Caco-2 (cell line): ENCODE measurements at regions of chr15 and their contacts with region 1.

Region 1: DNA sequence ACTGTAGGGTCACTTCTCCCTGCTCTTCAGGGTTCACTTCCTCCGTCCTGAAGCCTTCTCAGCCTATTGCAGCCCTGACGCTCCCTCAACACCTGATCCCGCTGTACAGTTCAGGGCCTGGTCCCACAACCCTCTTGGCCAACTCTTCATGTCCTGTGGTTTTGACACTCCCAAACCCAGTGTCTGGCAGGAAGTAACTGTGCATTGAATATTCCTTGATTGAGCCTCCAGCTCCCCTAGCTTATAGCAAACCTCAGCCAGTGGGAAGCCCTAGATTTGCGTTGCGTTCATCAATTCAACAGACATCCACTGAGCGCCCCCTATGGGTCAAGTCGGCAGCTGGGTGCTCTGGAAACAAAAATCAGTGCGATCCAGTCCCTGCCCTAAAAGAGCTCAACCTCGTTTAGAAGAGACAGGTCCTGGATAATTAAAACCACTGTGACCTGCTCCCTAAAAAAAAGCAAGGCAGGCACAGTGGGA is 13.5 kb downstream of the UBAP1L start:
- DNase-seq: peak; percentile 66 to 81
- H3K4me3 ChIP-seq: no peak overlapping the region
- H3K4me3 Mint-ChIP-seq: no peak overlapping the region
- H3K27ac Mint-ChIP-seq: peak overlapping the region; percentile 9
- H3K4me1 ChIP-seq: no peaks in the 10 kb centered on the region
- H3K4me1 Mint-ChIP-seq: peaks cover 6% of the 10 kb centered on the region
- H3K27me3 ChIP-seq: no peaks in the 10 kb centered on the region
- H3K27me3 Mint-ChIP-seq: no peaks in the 10 kb centered on the region
- CTCF ChIP-seq: peak; percentile 74 to 84

Region 2: GRCh38 chr15:64856429-64857145 is 244.9 kb before region 1 on chr15:
- CTCF ChIA-PET with region 1: no interaction called
- POLR2A ChIA-PET with region 1: no interaction called
- intact Hi-C with region 1: no loop called
- DNase-seq: no peak
- H3K4me3 ChIP-seq: no peak overlapping the region
- H3K4me3 Mint-ChIP-seq: no peak overlapping the region
- H3K27ac Mint-ChIP-seq: no peak overlapping the region
- H3K4me1 ChIP-seq: 0 out of 2 replicates have a peak, but pooled peaks cover 10% of the 10 kb centered on the region
- H3K4me1 Mint-ChIP-seq: peaks cover 14% of the 10 kb centered on the region
- H3K27me3 ChIP-seq: no peaks in the 10 kb centered on the region
- H3K27me3 Mint-ChIP-seq: no peaks in the 10 kb centered on the region
- CTCF ChIP-seq: no peak

Region 3: DNA sequence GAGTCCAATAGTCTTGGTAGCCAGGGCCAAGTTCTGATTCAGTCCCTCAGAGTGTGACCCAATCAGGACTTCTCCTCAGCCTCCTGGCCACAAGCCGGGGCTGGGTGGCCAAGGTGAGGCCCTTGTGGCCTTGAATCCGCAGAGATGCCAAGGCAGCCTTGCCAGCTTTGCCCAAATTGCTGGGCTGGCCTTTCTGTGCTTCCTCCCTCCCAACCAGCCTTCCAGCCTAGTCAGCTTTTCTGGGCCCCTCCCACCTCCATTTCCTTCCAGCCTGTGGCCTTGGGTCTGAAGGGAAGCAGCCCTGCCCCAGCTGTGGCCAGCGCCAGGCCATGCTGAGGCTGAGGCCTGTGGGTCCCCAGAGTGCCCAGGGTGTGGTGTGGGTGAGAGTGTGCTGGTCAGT is 224.0 kb before region 1 on chr15:
- CTCF ChIA-PET with region 1: no interaction called
- POLR2A ChIA-PET with region 1: no interaction called
- intact Hi-C with region 1: no loop called
- DNase-seq: no peak
- H3K4me3 ChIP-seq: no peak overlapping the region
- H3K4me3 Mint-ChIP-seq: no peak overlapping the region
- H3K27ac Mint-ChIP-seq: no peak overlapping the region
- H3K4me1 ChIP-seq: no peaks in the 10 kb centered on the region
- H3K4me1 Mint-ChIP-seq: peaks cover 7% of the 10 kb centered on the region
- H3K27me3 ChIP-seq: no peaks in the 10 kb centered on the region
- H3K27me3 Mint-ChIP-seq: no peaks in the 10 kb centered on the region
- CTCF ChIP-seq: no peak

Region 4: GRCh38 chr15:65044724-65045481 is 56.5 kb before region 1 on chr15 and contains the start of gene SLC51B:
- CTCF ChIA-PET with region 1: interaction called, 12 read pairs
- POLR2A ChIA-PET with region 1: no interaction called
- intact Hi-C with region 1: no loop called
- DNase-seq: peak; percentile 91 to 96
- H3K4me3 ChIP-seq: peak within 1 kb of the TSS; percentile 29
- H3K4me3 Mint-ChIP-seq: peak within 1 kb of the TSS; percentile 61
- H3K27ac Mint-ChIP-seq: peak within 1 kb of the TSS; percentile 70
- H3K4me1 ChIP-seq: peaks cover 59% of the 10 kb centered on the region
- H3K4me1 Mint-ChIP-seq: peaks cover 44% of the 10 kb centered on the region
- H3K27me3 ChIP-seq: no peaks in the 10 kb centered on the region
- H3K27me3 Mint-ChIP-seq: no peaks in the 10 kb centered on the region
- CTCF ChIP-seq: no peak
- total RNA-seq, gene SLC51B: 15.4 and 17.1 TPM in 2 replicates

Region 5: DNA sequence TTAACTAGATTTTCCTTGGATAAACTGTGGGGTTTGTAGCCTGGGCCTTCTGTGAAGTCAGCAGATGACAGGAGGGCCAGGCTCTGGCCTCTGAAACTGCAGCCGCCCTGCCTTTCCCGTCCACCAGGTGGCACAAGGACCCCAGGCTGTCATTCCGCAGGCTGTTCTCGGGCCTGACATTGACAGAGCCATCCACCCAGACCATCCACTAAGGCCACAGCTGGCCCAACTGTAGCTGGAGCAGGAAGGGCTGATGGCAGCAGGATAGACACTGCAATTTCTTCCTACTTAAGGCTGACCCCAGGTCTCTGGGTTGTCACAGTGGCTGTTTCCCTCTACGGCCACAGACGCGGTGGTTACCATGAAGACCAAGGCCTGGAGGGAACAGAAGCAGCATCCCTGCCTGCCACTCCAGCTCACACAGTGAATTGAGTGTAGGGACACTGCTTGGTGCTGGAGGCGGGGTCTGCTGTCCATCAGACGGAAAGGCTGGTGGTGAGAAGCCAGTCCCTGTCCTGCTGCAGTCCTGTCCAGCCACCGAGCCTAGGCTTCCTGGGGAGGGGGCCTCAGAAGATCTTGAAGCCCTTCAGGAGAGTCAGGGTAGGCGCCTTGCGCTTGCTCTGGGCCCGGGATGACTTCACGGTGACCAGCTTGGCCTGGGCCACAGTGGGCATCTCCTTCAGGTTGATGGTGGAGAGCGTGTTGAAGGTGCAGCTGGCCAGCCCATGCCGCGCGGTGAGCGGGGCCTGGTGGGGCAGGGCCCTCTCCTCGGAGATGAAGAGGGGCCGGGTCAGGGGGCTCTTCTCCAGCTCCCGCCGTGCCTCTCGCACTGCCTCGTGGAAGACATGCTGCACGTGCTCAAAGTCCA is 46.9 kb before region 1 on chr15:
- CTCF ChIA-PET with region 1: interaction called, 35 read pairs
- POLR2A ChIA-PET with region 1: interaction called, 4 read pairs
- intact Hi-C with region 1: loop called (anchors 1 kb)
- DNase-seq: peak; percentile 82 to 87
- H3K4me3 ChIP-seq: no peak overlapping the region
- H3K4me3 Mint-ChIP-seq: no peak overlapping the region
- H3K27ac Mint-ChIP-seq: peak overlapping the region; percentile 91
- H3K4me1 ChIP-seq: peaks cover 48% of the 10 kb centered on the region
- H3K4me1 Mint-ChIP-seq: peaks cover 31% of the 10 kb centered on the region
- H3K27me3 ChIP-seq: no peaks in the 10 kb centered on the region
- H3K27me3 Mint-ChIP-seq: no peaks in the 10 kb centered on the region
- CTCF ChIP-seq: peak; percentile 84 to 93

Region 6: DNA sequence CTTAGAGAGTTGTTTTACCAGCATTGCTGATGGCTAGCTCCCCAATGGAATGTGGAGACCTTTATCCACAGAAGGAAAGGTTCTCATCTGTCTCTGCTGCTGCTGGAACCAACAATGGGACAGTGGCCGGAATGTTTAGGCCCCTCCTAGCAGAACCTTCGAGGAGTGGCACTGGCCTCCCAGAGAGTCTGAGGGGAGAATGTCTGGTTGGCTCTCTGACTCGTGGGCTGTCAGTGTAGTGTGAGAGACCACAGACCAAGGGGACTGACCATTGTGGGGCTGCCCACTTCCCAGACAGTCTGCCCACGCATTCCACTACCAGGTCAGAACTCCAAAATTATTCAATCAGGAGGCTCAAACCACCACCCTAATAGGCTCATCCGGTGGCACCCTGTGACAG is 38.7 kb before region 1 on chr15:
- CTCF ChIA-PET with region 1: interaction called, 10 read pairs
- POLR2A ChIA-PET with region 1: no interaction called
- intact Hi-C with region 1: no loop called
- DNase-seq: no peak
- H3K4me3 ChIP-seq: no peak overlapping the region
- H3K4me3 Mint-ChIP-seq: no peak overlapping the region
- H3K27ac Mint-ChIP-seq: no peak overlapping the region
- H3K4me1 ChIP-seq: peaks cover 26% of the 10 kb centered on the region
- H3K4me1 Mint-ChIP-seq: peaks cover 22% of the 10 kb centered on the region
- H3K27me3 ChIP-seq: no peaks in the 10 kb centered on the region
- H3K27me3 Mint-ChIP-seq: no peaks in the 10 kb centered on the region
- CTCF ChIP-seq: no peak